A549 (cell line): ENCODE measurements at regions of chr11 and their contacts with region 1.

Region 1: GRCh38 chr11:2532704-2533586 is 88.1 kb downstream of the KCNQ1 start:
- DNase-seq: peak; percentile 83 to 95
- ATAC-seq: peak; percentile 77 to 92
- H3K4me3 ChIP-seq: no peak overlapping the region
- H3K27ac ChIP-seq: no peak overlapping the region
- H3K4me1 ChIP-seq: no peaks in the 10 kb centered on the region
- CTCF ChIP-seq: peak; percentile 99
- EP300 ChIP-seq: no peak
- POLR2A ChIP-seq: no peak
- RAD21 ChIP-seq: peak; percentile 99 to 100

Region 2: DNA sequence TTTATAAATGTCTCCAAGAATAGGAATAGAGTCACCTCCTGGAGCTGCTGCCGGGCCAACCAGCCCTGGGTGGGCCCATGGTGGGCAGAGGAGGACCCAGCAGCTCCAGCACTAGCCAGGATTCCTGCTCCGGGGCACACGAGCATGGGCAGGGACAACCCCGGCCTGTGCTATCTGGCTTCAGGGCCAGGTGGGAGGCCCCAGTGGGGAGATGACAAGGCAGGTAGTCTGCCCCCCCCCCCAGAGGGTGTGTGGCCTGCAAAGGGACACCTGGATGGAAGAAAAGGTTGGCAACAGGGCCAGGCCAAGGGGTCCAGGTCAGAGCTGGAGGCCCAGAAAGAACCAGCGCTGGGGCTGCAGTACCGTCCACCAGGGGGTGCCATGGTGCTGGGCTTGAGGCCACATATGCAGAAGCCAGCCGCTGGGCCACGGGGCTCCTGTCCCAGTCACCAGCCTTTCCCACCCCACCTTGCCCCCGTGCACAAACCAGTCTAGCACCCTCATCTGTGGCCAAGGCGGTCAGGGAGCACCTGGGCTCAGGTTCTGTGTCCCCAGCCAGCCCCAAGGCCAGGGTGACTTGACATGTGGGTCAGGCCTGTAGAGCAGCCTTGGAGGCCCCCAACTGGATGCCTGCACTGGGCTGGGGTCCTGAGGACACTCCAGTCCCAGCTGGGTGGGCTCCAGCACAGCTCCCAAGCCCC is 227.7 kb before region 1 on chr11:
- CTCF ChIA-PET with region 1: interaction called, 34 read pairs
- POLR2A ChIA-PET with region 1: no interaction called
- DNase-seq: peak; percentile 58 to 62
- ATAC-seq: peak; percentile 77 to 92
- H3K4me3 ChIP-seq: no peak overlapping the region
- H3K27ac ChIP-seq: no peak overlapping the region
- H3K4me1 ChIP-seq: no peaks in the 10 kb centered on the region
- CTCF ChIP-seq: peak; percentile 81
- EP300 ChIP-seq: no peak
- POLR2A ChIP-seq: no peak
- RAD21 ChIP-seq: peak; percentile 92 to 93

Region 3: DNA sequence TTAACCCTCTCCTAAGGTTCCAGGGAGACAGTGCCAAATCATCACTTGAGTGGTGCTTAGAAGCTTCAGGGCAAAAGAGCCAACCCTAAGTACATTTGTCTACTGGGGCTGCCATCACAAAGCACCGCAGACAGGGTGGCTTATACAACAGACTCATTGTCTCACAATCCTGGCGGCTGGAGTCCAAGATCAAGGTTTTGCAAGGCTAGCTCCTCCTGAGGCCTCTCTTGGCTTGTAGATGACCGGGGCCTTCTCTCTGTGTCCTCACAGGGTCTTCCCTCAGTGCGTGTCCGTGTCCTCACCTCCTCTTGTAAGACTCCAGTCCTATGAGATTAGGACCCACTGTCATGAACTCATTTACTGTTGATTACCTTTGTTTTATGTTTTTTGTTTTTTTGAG is 190.0 kb before region 1 on chr11:
- CTCF ChIA-PET with region 1: no interaction called
- POLR2A ChIA-PET with region 1: no interaction called
- DNase-seq: no peak
- ATAC-seq: no peak
- H3K4me3 ChIP-seq: no peak overlapping the region
- H3K27ac ChIP-seq: no peak overlapping the region
- H3K4me1 ChIP-seq: no peaks in the 10 kb centered on the region
- CTCF ChIP-seq: no peak
- EP300 ChIP-seq: no peak
- POLR2A ChIP-seq: no peak
- RAD21 ChIP-seq: no peak

Region 4: GRCh38 chr11:2428322-2428795 is 104.6 kb before region 1 on chr11:
- CTCF ChIA-PET with region 1: interaction called, 333 read pairs
- POLR2A ChIA-PET with region 1: no interaction called
- DNase-seq: peak; percentile 56 to 68
- ATAC-seq: peak; percentile 49 to 92; a peak in 3 of 6 replicates
- H3K4me3 ChIP-seq: no peak overlapping the region
- H3K27ac ChIP-seq: no peak overlapping the region
- H3K4me1 ChIP-seq: no peaks in the 10 kb centered on the region
- CTCF ChIP-seq: peak; percentile 62
- EP300 ChIP-seq: no peak
- POLR2A ChIP-seq: no peak
- RAD21 ChIP-seq: peak; percentile 87 to 95

Region 5: DNA sequence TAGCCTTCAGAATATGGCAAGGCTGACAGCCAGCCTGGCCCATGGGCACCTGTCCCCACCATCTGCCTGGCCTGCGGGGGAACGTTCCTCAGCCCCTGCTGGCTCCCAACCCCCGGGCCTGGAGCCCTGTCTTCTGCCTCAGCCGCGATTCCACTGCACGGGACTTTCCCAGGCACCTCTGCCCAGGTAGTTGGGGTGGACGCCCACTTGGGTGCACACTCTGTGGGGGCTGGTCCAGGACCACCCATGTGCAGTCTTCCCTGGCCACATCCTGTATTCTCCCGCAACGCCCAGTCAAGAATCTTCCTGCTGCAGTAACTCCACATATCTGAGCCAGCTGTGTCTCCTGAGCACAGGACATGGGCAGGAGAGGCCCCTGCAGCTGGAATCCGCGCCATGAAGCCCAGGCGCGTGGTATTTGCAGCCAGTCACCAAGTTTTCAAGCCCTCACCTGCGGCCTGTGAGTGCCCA is 10.2 kb before region 1 on chr11:
- CTCF ChIA-PET with region 1: interaction called, 83 read pairs
- POLR2A ChIA-PET with region 1: no interaction called
- DNase-seq: no peak
- ATAC-seq: no peak
- H3K4me3 ChIP-seq: no peak overlapping the region
- H3K27ac ChIP-seq: no peak overlapping the region
- H3K4me1 ChIP-seq: no peaks in the 10 kb centered on the region
- CTCF ChIP-seq: no peak
- EP300 ChIP-seq: no peak
- POLR2A ChIP-seq: no peak
- RAD21 ChIP-seq: no peak

Region 6: GRCh38 chr11:2831781-2832532 is 299.0 kb after region 1 on chr11:
- CTCF ChIA-PET with region 1: interaction called, 10 read pairs
- POLR2A ChIA-PET with region 1: no interaction called
- DNase-seq: no peak
- ATAC-seq: no peak
- H3K4me3 ChIP-seq: no peak overlapping the region
- H3K27ac ChIP-seq: no peak overlapping the region
- H3K4me1 ChIP-seq: no peaks in the 10 kb centered on the region; the same call in 2 of the 3 replicates
- CTCF ChIP-seq: no peak
- EP300 ChIP-seq: no peak
- POLR2A ChIP-seq: no peak
- RAD21 ChIP-seq: no peak

Region 7: DNA sequence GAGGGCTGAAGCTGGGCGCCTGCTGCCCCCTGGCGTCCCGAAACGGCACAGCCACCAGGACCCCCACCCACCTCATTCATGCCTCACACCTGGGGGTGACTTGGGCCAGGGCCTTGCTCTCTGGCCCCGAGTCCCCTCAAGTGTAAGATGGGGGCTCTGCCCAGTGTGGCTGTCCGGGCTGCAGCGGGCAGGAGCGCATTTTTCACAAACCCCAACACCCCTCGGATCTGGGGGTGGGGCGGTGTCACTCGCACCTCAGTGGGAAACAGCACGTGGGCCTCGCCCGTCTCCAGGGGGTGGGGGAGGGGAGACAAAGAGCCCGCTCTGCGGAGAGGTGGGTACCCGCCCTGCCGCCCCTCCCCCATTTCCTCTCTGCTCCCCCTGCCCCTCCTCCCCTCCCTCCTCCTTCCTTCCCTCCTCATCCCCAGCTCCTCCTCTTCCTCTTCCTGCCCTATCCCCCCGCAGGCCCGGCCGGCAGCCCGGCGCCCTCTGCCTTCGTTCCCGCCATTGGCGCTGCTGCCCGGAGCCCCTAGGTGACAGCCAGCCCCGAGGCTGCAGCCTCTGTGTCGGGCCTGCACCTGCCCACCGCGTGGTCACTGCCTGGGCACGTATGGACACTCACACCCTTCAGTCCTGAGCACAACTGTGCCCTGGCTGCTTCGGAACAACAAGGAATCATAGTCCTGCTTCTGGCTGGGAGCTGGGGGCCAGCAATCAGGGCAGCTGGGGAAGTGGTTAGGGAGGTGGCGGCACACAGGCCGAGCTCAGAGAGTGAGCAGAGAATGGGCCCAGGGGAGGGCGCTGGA is 359.5 kb after region 1 on chr11:
- CTCF ChIA-PET with region 1: interaction called, 1,059 read pairs
- POLR2A ChIA-PET with region 1: interaction called, 15 read pairs
- DNase-seq: peak; percentile 49 to 74
- ATAC-seq: peak; percentile 42 to 74
- H3K4me3 ChIP-seq: peak overlapping the region; percentile 42
- H3K27ac ChIP-seq: peak overlapping the region; percentile 74 to 90
- H3K4me1 ChIP-seq: peaks cover 16% of the 10 kb centered on the region
- CTCF ChIP-seq: peak; percentile 83
- EP300 ChIP-seq: no peak
- POLR2A ChIP-seq: peak; percentile 28; the same call in 1 of the 2 replicates
- RAD21 ChIP-seq: peak; percentile 81 to 83

Region 8: GRCh38 chr11:3412837-3413236 is 879.9 kb after region 1 on chr11:
- CTCF ChIA-PET with region 1: interaction called, 10 read pairs
- POLR2A ChIA-PET with region 1: no interaction called
- DNase-seq: no peak
- ATAC-seq: no peak
- H3K4me3 ChIP-seq: no peak overlapping the region
- H3K27ac ChIP-seq: no peak overlapping the region
- H3K4me1 ChIP-seq: no peaks in the 10 kb centered on the region
- CTCF ChIP-seq: no peak
- EP300 ChIP-seq: no peak
- POLR2A ChIP-seq: no peak
- RAD21 ChIP-seq: no peak